ENCODE measurements at regions of chr19 and their contacts with region 1.

Region 1: DNA sequence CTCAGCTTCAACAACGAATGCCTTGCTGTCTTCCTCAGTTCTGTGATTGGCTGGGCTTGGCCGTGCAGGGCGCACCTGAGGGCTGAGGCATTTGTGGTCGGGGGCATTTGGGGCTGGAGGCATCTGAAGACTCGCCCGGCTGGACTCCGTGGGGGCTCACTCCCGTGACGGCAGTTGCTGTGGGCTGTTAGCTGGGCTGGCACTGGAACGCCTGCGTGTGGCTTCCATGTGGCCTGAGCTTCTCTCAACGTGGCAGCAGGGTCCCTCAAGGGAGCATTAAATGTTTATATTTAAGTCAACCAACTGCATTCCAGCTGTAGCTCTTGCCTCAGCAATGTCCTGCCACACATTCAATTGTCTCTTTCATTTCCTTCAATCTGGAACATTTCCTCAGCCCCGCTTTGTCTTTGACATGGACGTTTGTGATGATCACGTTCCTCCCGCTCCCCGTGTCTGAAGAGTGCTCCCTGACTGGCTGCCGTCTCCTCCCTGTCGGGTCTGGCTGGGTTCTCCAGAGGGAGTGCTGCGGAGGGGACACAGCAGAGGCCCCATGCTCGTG is 21.0 kb downstream of the CCDC8 start:
- DNase-seq: no peak
- ATAC-seq: no peak
- H3K4me3 ChIP-seq: no peak overlapping the region
- H3K27ac ChIP-seq: no peak overlapping the region
- H3K4me1 ChIP-seq: no peaks in the 10 kb centered on the region
- CTCF ChIP-seq: no peak
- EP300 ChIP-seq: no peak
- POLR2A ChIP-seq: no peak
- RAD21 ChIP-seq: no peak

Region 2: GRCh38 chr19:46232029-46232428 is 160.3 kb before region 1 on chr19:
- CTCF ChIA-PET with region 1: no interaction called
- POLR2A ChIA-PET with region 1: no interaction called
- DNase-seq: no peak
- ATAC-seq: no peak
- H3K4me3 ChIP-seq: no peak overlapping the region
- H3K27ac ChIP-seq: no peak overlapping the region
- H3K4me1 ChIP-seq: peaks cover 4% of the 10 kb centered on the region
- CTCF ChIP-seq: no peak
- EP300 ChIP-seq: no peak
- POLR2A ChIP-seq: no peak
- RAD21 ChIP-seq: no peak

Region 3: GRCh38 chr19:46283771-46284170 is 108.6 kb before region 1 on chr19:
- CTCF ChIA-PET with region 1: interaction called, 73 read pairs
- POLR2A ChIA-PET with region 1: interaction called, 3 read pairs
- DNase-seq: no peak
- ATAC-seq: no peak
- H3K4me3 ChIP-seq: no peak overlapping the region
- H3K27ac ChIP-seq: no peak overlapping the region
- H3K4me1 ChIP-seq: peaks cover 1% of the 10 kb centered on the region
- CTCF ChIP-seq: no peak
- EP300 ChIP-seq: no peak
- POLR2A ChIP-seq: no peak
- RAD21 ChIP-seq: no peak

Region 4: GRCh38 chr19:46346821-46347571 is 45.3 kb before region 1 on chr19 and contains the start of gene PPP5C:
- CTCF ChIA-PET with region 1: interaction called, 30 read pairs
- POLR2A ChIA-PET with region 1: no interaction called
- DNase-seq: peak; percentile 98 to 100
- ATAC-seq: peak; percentile 88 to 92
- H3K4me3 ChIP-seq: peak within 1 kb of the TSS; percentile 71
- H3K27ac ChIP-seq: peak within 1 kb of the TSS; percentile 92 to 97
- H3K4me1 ChIP-seq: peaks cover 44% of the 10 kb centered on the region
- CTCF ChIP-seq: peak; percentile 96
- EP300 ChIP-seq: no peak
- POLR2A ChIP-seq: peak; percentile 80
- RAD21 ChIP-seq: peak; percentile 53 to 69
- polyA plus RNA-seq, gene PPP5C: 107 and 126 TPM in 2 replicates

Region 5: GRCh38 chr19:46413262-46414031 is 21.1 kb after region 1 on chr19 and contains the start of gene CCDC8:
- CTCF ChIA-PET with region 1: interaction called, 501 read pairs
- POLR2A ChIA-PET with region 1: no interaction called
- DNase-seq: no peak
- ATAC-seq: no peak
- H3K4me3 ChIP-seq: no peak within 1 kb of the TSS
- H3K27ac ChIP-seq: no peak within 1 kb of the TSS
- H3K4me1 ChIP-seq: peaks cover 11% of the 10 kb centered on the region; the same call in 2 of the 3 replicates
- CTCF ChIP-seq: no peak
- EP300 ChIP-seq: no peak
- POLR2A ChIP-seq: no peak
- RAD21 ChIP-seq: no peak
- polyA plus RNA-seq, gene CCDC8: 0.04 TPM in 1 of 2 replicates, not detected in the other

Region 6: DNA sequence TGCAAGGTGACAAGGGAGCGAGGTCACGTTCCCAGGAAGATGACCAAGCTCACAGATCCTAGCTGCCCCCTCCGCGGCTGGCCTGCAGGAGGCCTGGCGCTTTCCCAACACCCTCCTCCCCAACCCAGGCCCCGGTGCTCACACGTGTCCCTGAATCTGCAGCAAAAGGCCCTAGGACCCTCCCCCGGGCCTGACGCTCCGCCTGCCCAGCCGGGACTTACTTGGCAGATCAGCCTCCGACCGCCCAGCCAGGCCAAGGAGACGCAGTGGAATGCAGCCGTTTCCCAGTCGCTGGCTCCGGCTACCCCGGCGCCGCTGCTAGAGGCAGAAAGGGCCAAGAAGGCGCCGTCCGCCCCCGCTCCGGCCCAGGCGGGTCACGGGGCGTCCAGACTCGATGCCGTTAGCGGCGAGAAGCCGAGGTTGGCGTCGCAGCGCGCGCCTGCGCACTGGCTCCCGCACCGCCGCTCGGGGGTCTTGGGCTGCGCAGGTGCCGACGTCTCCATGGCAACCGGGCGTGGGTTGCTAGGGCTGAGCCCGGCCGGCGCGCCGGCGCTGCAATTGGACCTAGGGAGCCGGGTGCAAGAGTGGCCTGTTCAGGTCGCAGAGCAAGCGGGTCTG is 78.9 kb after region 1 on chr19 and contains the start of gene PNMA8A:
- CTCF ChIA-PET with region 1: interaction called, 358 read pairs
- POLR2A ChIA-PET with region 1: no interaction called
- DNase-seq: peak; percentile 57 to 65
- ATAC-seq: peak; percentile 67 to 78
- H3K4me3 ChIP-seq: peak within 1 kb of the TSS; percentile 55
- H3K27ac ChIP-seq: peak within 1 kb of the TSS; percentile 76 to 88
- H3K4me1 ChIP-seq: peaks cover 16% of the 10 kb centered on the region; the same call in 2 of the 3 replicates
- CTCF ChIP-seq: no peak
- EP300 ChIP-seq: no peak
- POLR2A ChIP-seq: peak; percentile 58
- RAD21 ChIP-seq: no peak
- polyA plus RNA-seq, gene PNMA8A: 11.2 and 14.1 TPM in 2 replicates

Region 7: GRCh38 chr19:46503848-46504453 is 111.6 kb after region 1 on chr19:
- CTCF ChIA-PET with region 1: interaction called, 14 read pairs
- POLR2A ChIA-PET with region 1: no interaction called
- DNase-seq: no peak
- ATAC-seq: no peak
- H3K4me3 ChIP-seq: no peak overlapping the region
- H3K27ac ChIP-seq: no peak overlapping the region
- H3K4me1 ChIP-seq: no peaks in the 10 kb centered on the region
- CTCF ChIP-seq: no peak
- EP300 ChIP-seq: no peak
- POLR2A ChIP-seq: no peak
- RAD21 ChIP-seq: no peak

Region 8: GRCh38 chr19:46529622-46530462 is 137.5 kb after region 1 on chr19:
- CTCF ChIA-PET with region 1: interaction called, 14 read pairs
- POLR2A ChIA-PET with region 1: no interaction called
- DNase-seq: peak; percentile 69 to 89
- ATAC-seq: peak; percentile 63 to 84; a peak in 5 of 6 replicates
- H3K4me3 ChIP-seq: no peak overlapping the region
- H3K27ac ChIP-seq: peak overlapping the region in 1 of 2 experiments; percentile 36; a peak in 2 of 6 replicates
- H3K4me1 ChIP-seq: peaks cover 10% of the 10 kb centered on the region; the same call in 1 of the 3 replicates
- CTCF ChIP-seq: peak; percentile 100
- EP300 ChIP-seq: no peak
- POLR2A ChIP-seq: no peak
- RAD21 ChIP-seq: peak; percentile 96 to 97